Activated CD4-positive, alpha-beta memory T cell treated with anti-CD3 and anti-CD28 coated beads for 36 hours (primary cell): ENCODE measurements at regions of chr4 and their contacts with region 1.

Region 1: GRCh38 chr4:6327041-6327917 is 57.6 kb downstream of the WFS1 start:
- DNase-seq: peak; percentile 86
- H3K4me3 Mint-ChIP-seq: no peak overlapping the region
- H3K27ac Mint-ChIP-seq: no peak overlapping the region
- H3K4me1 Mint-ChIP-seq: no peaks in the 10 kb centered on the region
- H3K27me3 Mint-ChIP-seq: peaks cover 31% of the 10 kb centered on the region

Region 2: DNA sequence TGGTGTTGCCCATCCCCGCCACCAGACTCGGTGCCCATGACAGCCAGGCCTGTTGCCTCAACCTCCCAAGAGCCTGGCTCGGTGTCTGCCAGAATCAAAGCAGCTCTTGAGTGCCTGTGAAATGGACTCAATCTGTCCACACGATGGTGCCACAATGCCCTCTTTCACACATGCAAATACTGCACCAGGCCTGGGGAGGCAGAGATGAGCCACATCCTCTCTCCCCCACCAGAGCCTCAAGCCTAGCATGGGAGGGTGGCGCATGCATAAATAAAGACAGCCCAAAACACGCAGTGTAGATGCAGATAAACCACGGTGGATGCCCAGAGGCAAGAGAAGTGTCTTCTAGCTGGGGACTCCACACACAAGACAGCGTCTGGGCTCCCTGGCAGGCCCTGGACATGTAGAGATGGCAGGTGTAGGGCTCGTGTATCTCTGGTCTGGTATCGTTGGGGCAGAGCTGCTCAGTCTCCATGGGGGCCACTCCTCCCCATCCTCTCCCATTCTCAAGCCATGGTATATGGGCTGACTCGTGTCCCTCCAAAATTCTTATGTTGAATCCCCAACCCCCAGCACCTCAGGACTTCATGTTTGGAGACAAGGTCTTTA is 192.6 kb before region 1 on chr4:
- CTCF ChIA-PET with region 1: interaction called, 32 read pairs
- POLR2A ChIA-PET with region 1: no interaction called
- intact Hi-C with region 1: loop called (anchors 5 kb)
- DNase-seq: peak; percentile 73
- H3K4me3 Mint-ChIP-seq: no peak overlapping the region
- H3K27ac Mint-ChIP-seq: no peak overlapping the region
- H3K4me1 Mint-ChIP-seq: peaks cover 8% of the 10 kb centered on the region
- H3K27me3 Mint-ChIP-seq: no peaks in the 10 kb centered on the region

Region 3: GRCh38 chr4:6264225-6264540 is 63.1 kb before region 1 on chr4:
- CTCF ChIA-PET with region 1: interaction called, 505 read pairs
- POLR2A ChIA-PET with region 1: no interaction called
- intact Hi-C with region 1: loop called (anchors 5 kb)
- DNase-seq: peak; percentile 46
- H3K4me3 Mint-ChIP-seq: no peak overlapping the region
- H3K27ac Mint-ChIP-seq: no peak overlapping the region
- H3K4me1 Mint-ChIP-seq: peaks cover 5% of the 10 kb centered on the region
- H3K27me3 Mint-ChIP-seq: peaks cover 14% of the 10 kb centered on the region

Region 4: GRCh38 chr4:6275898-6276806 is 51.1 kb before region 1 on chr4:
- CTCF ChIA-PET with region 1: interaction called, 31 read pairs
- POLR2A ChIA-PET with region 1: no interaction called
- intact Hi-C with region 1: no loop called
- DNase-seq: no peak
- H3K4me3 Mint-ChIP-seq: no peak overlapping the region
- H3K27ac Mint-ChIP-seq: no peak overlapping the region
- H3K4me1 Mint-ChIP-seq: peaks cover 9% of the 10 kb centered on the region
- H3K27me3 Mint-ChIP-seq: peaks cover 3% of the 10 kb centered on the region

Region 5: GRCh38 chr4:6338175-6338950 is 11.1 kb after region 1 on chr4:
- CTCF ChIA-PET with region 1: interaction called, 78 read pairs
- POLR2A ChIA-PET with region 1: no interaction called
- intact Hi-C with region 1: no loop called
- DNase-seq: peak; percentile 39
- H3K4me3 Mint-ChIP-seq: no peak overlapping the region
- H3K27ac Mint-ChIP-seq: no peak overlapping the region
- H3K4me1 Mint-ChIP-seq: peaks cover 17% of the 10 kb centered on the region
- H3K27me3 Mint-ChIP-seq: peaks cover 25% of the 10 kb centered on the region

Region 6: DNA sequence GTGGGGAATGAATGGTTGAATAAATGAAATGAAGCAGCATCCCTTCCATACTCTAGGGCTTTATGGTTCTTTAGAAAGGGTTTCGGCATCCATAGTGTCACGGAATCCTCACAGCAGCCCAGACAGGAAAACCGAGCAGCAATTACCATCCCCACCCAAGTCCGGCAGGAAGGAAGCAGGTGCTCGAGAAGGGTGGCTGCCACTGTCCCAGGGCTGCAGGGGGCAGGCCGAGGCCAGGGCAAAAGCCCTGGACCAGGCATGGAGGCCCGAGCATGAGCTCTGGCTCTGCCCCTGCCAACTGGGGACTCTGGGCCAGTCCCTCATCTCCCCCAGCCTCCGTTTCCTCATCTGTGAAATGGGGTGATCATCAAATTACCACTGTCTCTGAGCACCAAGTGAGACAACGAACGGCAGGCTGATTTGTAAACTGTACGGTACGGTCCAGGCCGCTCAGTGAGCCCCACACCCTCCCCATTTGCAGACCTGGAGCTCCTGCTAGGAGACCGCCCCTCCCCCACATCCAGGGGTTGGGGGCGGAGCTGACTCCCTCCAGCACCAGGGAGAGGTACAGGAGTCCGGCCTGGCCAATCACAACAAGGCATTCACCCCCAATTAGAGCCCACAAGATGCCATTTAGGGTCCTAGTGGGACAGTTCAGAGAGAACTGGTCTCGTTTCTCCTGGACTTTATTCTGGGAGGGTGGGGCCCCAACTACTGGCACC is 42.8 kb after region 1 on chr4:
- CTCF ChIA-PET with region 1: no interaction called
- POLR2A ChIA-PET with region 1: no interaction called
- intact Hi-C with region 1: no loop called
- DNase-seq: no peak
- H3K4me3 Mint-ChIP-seq: no peak overlapping the region
- H3K27ac Mint-ChIP-seq: no peak overlapping the region
- H3K4me1 Mint-ChIP-seq: no peaks in the 10 kb centered on the region
- H3K27me3 Mint-ChIP-seq: peaks cover 8% of the 10 kb centered on the region

Region 7: GRCh38 chr4:6546681-6547447 is 219.6 kb after region 1 on chr4:
- CTCF ChIA-PET with region 1: interaction called, 5 read pairs
- POLR2A ChIA-PET with region 1: no interaction called
- intact Hi-C with region 1: loop called (anchors 2 kb)
- DNase-seq: peak; percentile 54
- H3K4me3 Mint-ChIP-seq: no peak overlapping the region
- H3K27ac Mint-ChIP-seq: no peak overlapping the region
- H3K4me1 Mint-ChIP-seq: no peaks in the 10 kb centered on the region
- H3K27me3 Mint-ChIP-seq: peaks cover 33% of the 10 kb centered on the region